Activated T-helper 1 cell treated with anti-CD3 and anti-CD28 coated beads, Interleukin-12 subunit alpha, Interleukin-12 subunit beta, Interleukin-2, Interleukin-4 antibody, amounts not matched to agents 30 ng/mL and 10 ng/mL and 1 ng/mL, durations not matched to agents 14 hours and 24 hours and 36 hours (primary cell): ENCODE measurements at regions of chrX and their contacts with region 1.

Region 1: GRCh38 chrX:71622576-71623450 is 4.5 kb upstream of the CXCR3 start:
- DNase-seq: peak; percentile 65
- H3K4me3 Mint-ChIP-seq: peak overlapping the region; percentile 70
- H3K27ac Mint-ChIP-seq: peak overlapping the region; percentile 97
- H3K4me1 Mint-ChIP-seq: peaks cover 60% of the 10 kb centered on the region
- H3K27me3 Mint-ChIP-seq: no peaks in the 10 kb centered on the region

Region 2: GRCh38 chrX:71283403-71284143 is 339.2 kb before region 1 on chrX and contains the start of gene NONO:
- intact Hi-C with region 1: loop called (anchors 2 kb)
- DNase-seq: peak; percentile 84
- H3K4me3 Mint-ChIP-seq: peak within 1 kb of the TSS; percentile 94
- H3K27ac Mint-ChIP-seq: peak within 1 kb of the TSS; percentile 98
- H3K4me1 Mint-ChIP-seq: peaks cover 15% of the 10 kb centered on the region
- H3K27me3 Mint-ChIP-seq: no peaks in the 10 kb centered on the region
- total RNA-seq, gene NONO: 512 and 546 TPM in 2 replicates

Region 3: GRCh38 chrX:71532753-71533425 is 89.9 kb before region 1 on chrX and contains the start of gene OGT:
- intact Hi-C with region 1: loop called (anchors 1 kb)
- DNase-seq: peak; percentile 88
- H3K4me3 Mint-ChIP-seq: peak within 1 kb of the TSS; percentile 95
- H3K27ac Mint-ChIP-seq: peak within 1 kb of the TSS; percentile 100
- H3K4me1 Mint-ChIP-seq: peaks cover 26% of the 10 kb centered on the region
- H3K27me3 Mint-ChIP-seq: no peaks in the 10 kb centered on the region
- total RNA-seq, gene OGT: 295 and 305 TPM in 2 replicates

Region 4: GRCh38 chrX:71609095-71609750 is 13.6 kb before region 1 on chrX:
- intact Hi-C with region 1: loop called (anchors 2 kb)
- DNase-seq: no peak
- H3K4me3 Mint-ChIP-seq: no peak overlapping the region
- H3K27ac Mint-ChIP-seq: peak overlapping the region; percentile 83
- H3K4me1 Mint-ChIP-seq: peaks cover 67% of the 10 kb centered on the region
- H3K27me3 Mint-ChIP-seq: no peaks in the 10 kb centered on the region

Region 5: DNA sequence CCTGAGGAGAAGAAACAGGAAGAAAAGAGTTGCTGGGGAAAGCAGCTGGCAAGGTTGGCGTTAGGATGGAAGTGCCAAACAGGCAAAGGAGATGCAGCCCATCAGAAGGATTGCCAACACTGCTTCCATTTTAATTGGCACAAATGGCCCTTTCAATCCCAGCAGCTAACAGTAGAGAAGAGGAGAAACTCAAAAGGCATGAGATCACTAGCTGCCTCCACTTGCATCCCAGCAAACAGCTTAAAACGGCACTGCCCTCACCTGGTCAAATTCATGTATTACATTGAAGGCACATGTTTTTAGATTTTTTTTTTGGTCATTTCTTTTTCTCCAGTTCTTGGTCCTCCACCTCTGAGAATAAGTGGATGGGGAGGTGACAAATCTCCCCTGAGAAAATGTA is 29.6 kb after region 1 on chrX:
- intact Hi-C with region 1: loop called (anchors 1 kb)
- DNase-seq: peak; percentile 28
- H3K4me3 Mint-ChIP-seq: no peak overlapping the region
- H3K27ac Mint-ChIP-seq: no peak overlapping the region
- H3K4me1 Mint-ChIP-seq: peaks cover 28% of the 10 kb centered on the region
- H3K27me3 Mint-ChIP-seq: peaks cover 7% of the 10 kb centered on the region

Region 6: GRCh38 chrX:72620550-72621145 is 997.8 kb after region 1 on chrX:
- intact Hi-C with region 1: loop called (anchors 5 kb)
- DNase-seq: peak; percentile 4
- H3K4me3 Mint-ChIP-seq: peak overlapping the region; percentile 78
- H3K27ac Mint-ChIP-seq: peak overlapping the region; percentile 97
- H3K4me1 Mint-ChIP-seq: peaks cover 29% of the 10 kb centered on the region
- H3K27me3 Mint-ChIP-seq: peaks cover 3% of the 10 kb centered on the region